ENCODE measurements at regions of chr16 and their contacts with region 1.

Region 1: DNA sequence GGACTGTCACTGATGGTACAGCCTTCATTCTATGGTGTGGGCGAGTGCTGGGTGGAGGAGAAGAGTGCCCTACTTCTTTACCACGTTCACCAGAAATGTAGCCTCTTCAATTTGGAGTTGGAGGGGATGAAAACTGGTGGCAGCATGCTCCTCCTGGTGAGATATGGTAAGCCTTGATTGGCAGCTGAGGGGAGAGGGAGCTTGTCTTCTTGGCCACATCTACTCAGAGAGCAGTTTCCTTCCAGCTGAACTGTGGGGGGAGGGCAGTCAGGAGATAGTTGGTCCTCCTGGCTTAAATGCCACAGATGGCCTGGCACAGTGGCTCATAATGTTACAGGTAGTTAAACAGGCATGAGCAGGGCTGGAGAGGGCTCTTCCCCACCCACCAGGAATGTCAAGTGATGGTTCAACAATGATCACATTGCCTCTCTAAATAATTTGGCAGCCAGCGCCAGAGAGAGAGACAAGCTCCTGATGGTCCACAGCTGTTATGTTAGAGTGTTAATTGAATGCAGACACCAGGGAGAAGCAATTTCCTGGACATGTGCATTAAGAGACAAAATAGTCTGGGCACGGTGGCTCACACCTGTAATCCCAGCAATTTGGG is 9.0 kb upstream of the MAPK3 start:
- DNase-seq: no peak
- H3K4me3 ChIP-seq: no peak overlapping the region
- H3K27ac ChIP-seq: no peak overlapping the region
- H3K4me1 ChIP-seq: no peaks in the 10 kb centered on the region
- H3K27me3 ChIP-seq: no peaks in the 10 kb centered on the region
- CTCF ChIP-seq: no peak
- EP300 ChIP-seq: no peak
- POLR2A ChIP-seq: no peak

Region 2: GRCh38 chr16:30018731-30019158 is 113.2 kb before region 1 on chr16:
- intact Hi-C with region 1: no loop called
- DNase-seq: no peak
- H3K4me3 ChIP-seq: no peak overlapping the region
- H3K27ac ChIP-seq: no peak overlapping the region
- H3K4me1 ChIP-seq: no peaks in the 10 kb centered on the region
- H3K27me3 ChIP-seq: no peaks in the 10 kb centered on the region
- CTCF ChIP-seq: no peak
- EP300 ChIP-seq: no peak
- POLR2A ChIP-seq: no peak

Region 3: GRCh38 chr16:30183233-30184095 is 51.5 kb after region 1 on chr16 and contains the start of gene CORO1A:
- intact Hi-C with region 1: loop called in 1 of 4 experiments (anchors 5 kb)
- DNase-seq: peak; percentile 79 to 88 (median 83)
- H3K4me3 ChIP-seq: peak within 1 kb of the TSS; percentile 52
- H3K27ac ChIP-seq: peak within 1 kb of the TSS; percentile 18 to 63
- H3K4me1 ChIP-seq: peaks cover 8% of the 10 kb centered on the region
- H3K27me3 ChIP-seq: no peaks in the 10 kb centered on the region
- CTCF ChIP-seq: no peak
- EP300 ChIP-seq: no peak
- POLR2A ChIP-seq: peak; percentile 29
- total RNA-seq, gene CORO1A: 6.7 to 33.3 (median 14.1) TPM

Region 4: GRCh38 chr16:30724641-30725417 is 592.9 kb after region 1 on chr16:
- intact Hi-C with region 1: loop called in 1 of 4 experiments (anchors 10 kb)
- DNase-seq: peak; percentile 48 to 83 (median 71)
- H3K4me3 ChIP-seq: no peak overlapping the region
- H3K27ac ChIP-seq: no peak overlapping the region
- H3K4me1 ChIP-seq: no peaks in the 10 kb centered on the region
- H3K27me3 ChIP-seq: no peaks in the 10 kb centered on the region
- CTCF ChIP-seq: no peak
- EP300 ChIP-seq: no peak
- POLR2A ChIP-seq: no peak

Measured in ovary (tissue), 10 donors.